Right ventricle myocardium superior (tissue), 1 donor: ENCODE measurements at regions of chr18 and their contacts with region 1.

Region 1: GRCh38 chr18:37450434-37451132 is 115.0 kb downstream of the CELF4 start:
- DNase-seq: no peak
- ATAC-seq: no peak

Region 2: DNA sequence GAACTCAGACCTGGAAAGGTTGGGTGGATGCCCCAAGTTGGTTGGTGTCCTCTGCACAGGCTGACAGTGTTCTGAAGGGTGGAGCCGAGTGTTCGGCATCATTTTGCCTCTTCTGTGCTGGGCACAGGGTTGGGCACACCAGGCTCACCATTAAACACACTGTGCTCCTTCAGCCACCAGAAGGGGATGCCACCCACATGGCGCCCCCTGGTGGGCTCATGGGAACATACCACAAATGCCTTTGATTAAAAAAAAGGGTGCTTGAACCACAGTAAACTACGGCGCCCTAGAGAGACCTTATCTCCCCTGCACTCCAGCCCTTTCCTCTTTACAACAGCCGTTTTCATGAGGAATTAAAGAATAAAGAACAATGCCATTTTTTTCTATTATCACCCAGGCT is 25.6 kb after region 1 on chr18:
- intact Hi-C with region 1: loop called (anchors 2 kb)
- DNase-seq: no peak
- ATAC-seq: no peak

Region 3: DNA sequence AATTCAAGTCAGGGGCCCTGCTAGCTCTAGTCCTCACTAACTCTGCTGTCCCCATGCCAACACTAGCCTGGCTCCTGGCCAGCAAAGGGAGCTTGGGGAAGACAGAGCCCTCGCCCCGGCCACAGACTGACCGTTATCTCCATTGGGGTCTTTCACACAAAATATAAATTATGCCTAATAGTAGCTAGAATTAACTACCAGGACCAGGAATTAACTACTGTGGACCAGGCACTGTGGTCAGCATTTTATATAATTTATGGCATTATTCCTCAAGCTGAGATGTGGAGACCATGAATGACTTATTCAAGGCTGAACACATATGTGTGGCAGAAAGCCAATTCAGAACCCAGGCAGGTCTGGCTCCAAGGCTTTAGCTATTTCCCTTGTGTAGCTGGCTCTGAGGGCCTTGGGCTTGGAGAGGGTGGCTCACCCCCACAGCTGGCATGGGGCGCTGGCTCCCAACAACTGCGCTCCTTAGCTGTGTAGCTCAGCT is 65.8 kb after region 1 on chr18:
- intact Hi-C with region 1: no loop called
- DNase-seq: no peak
- ATAC-seq: no peak

Region 4: DNA sequence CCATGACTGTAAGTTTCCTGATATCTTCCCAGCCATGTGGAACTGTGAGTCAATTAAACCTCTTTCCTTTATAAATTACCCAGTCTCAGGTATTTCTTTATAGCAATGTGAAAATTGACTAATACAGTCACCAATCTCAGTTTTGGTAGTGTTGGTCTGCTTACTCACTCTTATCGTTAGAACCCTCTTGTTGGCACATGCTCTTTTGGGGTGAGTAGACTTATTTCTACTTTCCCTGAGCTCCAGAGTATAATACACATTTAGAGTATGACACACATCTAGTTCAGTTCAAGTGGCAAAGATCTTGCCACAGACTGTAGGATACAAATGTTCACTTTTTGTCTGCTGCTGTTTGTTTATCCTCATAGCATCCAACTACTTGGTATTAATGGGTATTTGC is 462.5 kb after region 1 on chr18:
- intact Hi-C with region 1: no loop called
- DNase-seq: no peak
- ATAC-seq: no peak